ENCODE measurements at regions of chr20 and their contacts with region 1.

Region 1: DNA sequence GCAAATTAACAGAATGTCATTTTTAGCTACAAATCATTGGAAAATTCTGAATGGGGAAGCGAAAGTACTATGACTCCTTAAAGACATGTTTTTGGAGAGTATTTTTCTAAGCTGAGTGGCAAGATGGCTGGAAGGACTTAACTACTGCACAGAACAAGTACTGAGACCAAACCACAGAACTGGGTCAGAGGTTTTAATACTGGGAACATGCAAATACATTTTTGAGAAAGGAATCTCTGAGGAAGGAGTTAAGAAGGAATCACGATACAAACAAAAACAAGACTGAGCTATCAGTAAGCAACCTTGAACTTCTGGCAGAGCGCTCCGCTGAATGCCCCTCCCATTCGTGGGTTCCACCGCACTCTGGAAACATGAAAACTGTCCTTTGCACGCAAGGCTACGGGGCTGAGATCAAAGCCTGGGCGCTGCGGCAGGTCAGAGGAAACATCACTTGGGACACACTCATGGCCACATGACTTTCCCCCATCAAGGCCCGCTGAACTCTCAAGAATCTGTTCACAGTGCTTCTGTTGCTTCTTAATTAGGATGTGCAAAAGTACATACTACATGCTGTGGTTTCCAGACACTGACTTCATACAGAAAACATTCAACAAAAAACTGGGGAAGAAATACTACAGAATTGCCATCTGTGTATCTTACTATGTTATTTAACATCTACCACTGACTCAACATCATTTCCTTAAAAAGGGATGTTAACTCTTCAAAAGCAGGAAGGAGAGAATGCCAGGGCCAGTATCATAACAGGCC is 27.8 kb downstream of the SLC23A2 start:
- DNase-seq: peak; percentile 59
- ATAC-seq: peak; percentile 78
- H3K4me3 Mint-ChIP-seq: peak overlapping the region; percentile 81
- H3K27ac Mint-ChIP-seq: peak overlapping the region; percentile 96
- H3K4me1 Mint-ChIP-seq: peaks cover 67% of the 10 kb centered on the region
- H3K27me3 Mint-ChIP-seq: no peaks in the 10 kb centered on the region
- CTCF ChIP-seq: no peak

Region 2: GRCh38 chr20:4898282-4899244 is 75.0 kb before region 1 on chr20:
- CTCF ChIA-PET with region 1: no interaction called
- POLR2A ChIA-PET with region 1: no interaction called
- intact Hi-C with region 1: no loop called
- DNase-seq: no peak
- ATAC-seq: no peak
- H3K4me3 Mint-ChIP-seq: no peak overlapping the region
- H3K27ac Mint-ChIP-seq: no peak overlapping the region
- H3K4me1 Mint-ChIP-seq: peaks cover 31% of the 10 kb centered on the region
- H3K27me3 Mint-ChIP-seq: no peaks in the 10 kb centered on the region
- CTCF ChIP-seq: no peak

Region 3: GRCh38 chr20:4944518-4945313 is 28.8 kb before region 1 on chr20:
- CTCF ChIA-PET with region 1: no interaction called
- POLR2A ChIA-PET with region 1: interaction called, 10 read pairs
- intact Hi-C with region 1: no loop called
- DNase-seq: no peak
- ATAC-seq: no peak
- H3K4me3 Mint-ChIP-seq: no peak overlapping the region
- H3K27ac Mint-ChIP-seq: no peak overlapping the region
- H3K4me1 Mint-ChIP-seq: peaks cover 85% of the 10 kb centered on the region
- H3K27me3 Mint-ChIP-seq: no peaks in the 10 kb centered on the region
- CTCF ChIP-seq: no peak

Region 4: GRCh38 chr20:4961746-4962145 is 11.8 kb before region 1 on chr20:
- CTCF ChIA-PET with region 1: interaction called, 3 read pairs
- POLR2A ChIA-PET with region 1: interaction called, 21 read pairs
- intact Hi-C with region 1: loop called (anchors 1 kb)
- DNase-seq: no peak
- ATAC-seq: peak; percentile 34
- H3K4me3 Mint-ChIP-seq: no peak overlapping the region
- H3K27ac Mint-ChIP-seq: peak overlapping the region; percentile 67
- H3K4me1 Mint-ChIP-seq: peaks cover 39% of the 10 kb centered on the region
- H3K27me3 Mint-ChIP-seq: no peaks in the 10 kb centered on the region
- CTCF ChIP-seq: no peak

Region 5: DNA sequence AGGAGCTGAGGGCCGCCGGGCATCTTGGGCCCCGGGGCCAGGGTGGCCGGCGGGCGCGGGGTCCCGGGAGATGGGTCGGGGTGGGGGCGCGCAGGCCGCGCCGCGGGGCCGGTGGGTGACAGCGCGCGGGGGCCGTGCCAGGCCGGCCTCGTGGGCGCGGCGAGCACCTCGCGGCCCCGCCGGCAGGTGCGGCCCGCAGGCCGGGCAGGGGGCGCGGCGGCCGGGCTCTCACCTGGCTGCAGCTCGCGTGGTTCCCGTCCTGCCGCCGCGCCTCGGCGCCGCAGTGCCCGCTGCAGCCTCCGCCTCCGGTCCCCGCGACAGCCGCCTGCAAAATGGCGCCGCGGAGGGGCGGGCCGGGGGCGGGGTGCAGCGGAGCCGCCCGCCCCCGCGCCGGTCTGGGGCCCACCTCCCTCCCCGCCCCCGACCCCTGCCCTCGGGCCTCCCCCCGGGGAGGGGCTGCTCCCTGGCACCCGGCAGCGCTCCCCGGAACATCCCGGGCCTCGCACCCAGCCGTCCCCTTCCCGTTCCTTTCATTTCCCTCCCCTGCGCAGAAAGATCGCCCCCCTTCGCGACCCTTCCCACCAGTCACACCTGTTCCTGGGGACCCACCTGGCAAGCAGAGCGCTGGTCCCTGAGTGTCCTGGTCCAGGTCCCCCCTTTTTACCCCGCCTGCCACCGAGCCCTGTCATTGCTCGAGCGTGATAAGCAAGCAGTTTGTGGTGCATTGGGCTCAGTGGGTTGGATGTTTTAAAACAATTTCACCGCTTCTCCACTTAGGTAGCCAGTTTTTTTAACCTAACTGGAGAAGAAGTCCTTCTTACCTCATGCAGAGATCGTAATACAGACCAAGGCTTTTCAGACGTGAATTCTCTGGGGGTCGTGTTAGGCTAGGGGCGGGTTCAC is 27.9 kb after region 1 on chr20 and contains the start of gene SLC23A2:
- CTCF ChIA-PET with region 1: interaction called, 4 read pairs
- POLR2A ChIA-PET with region 1: interaction called, 10 read pairs
- intact Hi-C with region 1: no loop called
- DNase-seq: peak; percentile 64
- ATAC-seq: peak; percentile 81
- H3K4me3 Mint-ChIP-seq: peak within 1 kb of the TSS; percentile 98
- H3K27ac Mint-ChIP-seq: peak within 1 kb of the TSS; percentile 92
- H3K4me1 Mint-ChIP-seq: peaks cover 43% of the 10 kb centered on the region
- H3K27me3 Mint-ChIP-seq: no peaks in the 10 kb centered on the region
- CTCF ChIP-seq: no peak
- total RNA-seq, gene SLC23A2: 70.9 and 79.8 TPM in 2 replicates

Region 6: DNA sequence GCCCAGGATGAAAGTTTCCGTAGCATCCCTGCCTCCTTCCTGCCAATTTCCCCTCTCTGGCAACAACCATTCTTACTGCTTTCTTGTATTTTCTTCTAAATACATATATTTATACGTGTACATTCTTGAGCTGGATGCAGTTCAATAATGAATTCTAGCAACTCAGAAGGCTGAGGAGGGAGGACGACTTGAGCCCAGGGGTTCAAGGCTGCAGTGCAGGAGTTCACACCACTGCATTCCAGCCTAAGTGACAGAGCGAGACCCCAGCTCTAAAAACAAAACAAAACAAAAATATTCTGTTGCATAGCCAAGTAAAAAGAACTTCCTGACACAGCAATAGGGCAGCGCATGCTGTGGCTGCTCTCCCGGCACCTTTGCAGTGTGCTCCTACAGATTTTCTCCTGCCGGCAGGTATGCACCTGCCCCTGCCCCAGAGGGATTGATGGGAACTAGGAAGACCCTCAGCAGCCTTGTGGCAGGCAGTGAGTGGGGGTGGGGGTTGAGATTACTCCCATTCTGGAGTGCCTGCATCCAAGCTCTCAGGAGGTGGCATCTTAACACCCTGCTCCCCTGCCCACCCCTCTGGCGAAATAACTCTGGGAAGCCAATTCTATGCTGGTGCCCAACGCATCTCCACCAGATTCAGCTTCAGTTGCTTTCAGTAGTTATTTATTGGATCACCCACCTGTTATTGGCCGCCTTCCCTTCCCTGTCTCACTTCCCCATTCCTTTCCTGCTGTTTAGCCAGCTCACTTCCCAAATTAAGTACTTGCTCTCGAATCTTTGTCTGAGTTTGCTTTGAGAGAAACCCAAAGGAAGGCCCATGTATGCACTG is 56.7 kb after region 1 on chr20:
- CTCF ChIA-PET with region 1: no interaction called
- POLR2A ChIA-PET with region 1: no interaction called
- intact Hi-C with region 1: no loop called
- DNase-seq: no peak
- ATAC-seq: no peak
- H3K4me3 Mint-ChIP-seq: no peak overlapping the region
- H3K27ac Mint-ChIP-seq: no peak overlapping the region
- H3K4me1 Mint-ChIP-seq: peaks cover 4% of the 10 kb centered on the region
- H3K27me3 Mint-ChIP-seq: no peaks in the 10 kb centered on the region
- CTCF ChIP-seq: no peak

Region 7: GRCh38 chr20:5045906-5046305 is 72.4 kb after region 1 on chr20:
- CTCF ChIA-PET with region 1: no interaction called
- POLR2A ChIA-PET with region 1: no interaction called
- intact Hi-C with region 1: no loop called
- DNase-seq: no peak
- ATAC-seq: no peak
- H3K4me3 Mint-ChIP-seq: no peak overlapping the region
- H3K27ac Mint-ChIP-seq: peak overlapping the region; percentile 42
- H3K4me1 Mint-ChIP-seq: peaks cover 34% of the 10 kb centered on the region
- H3K27me3 Mint-ChIP-seq: no peaks in the 10 kb centered on the region
- CTCF ChIP-seq: no peak

Region 8: DNA sequence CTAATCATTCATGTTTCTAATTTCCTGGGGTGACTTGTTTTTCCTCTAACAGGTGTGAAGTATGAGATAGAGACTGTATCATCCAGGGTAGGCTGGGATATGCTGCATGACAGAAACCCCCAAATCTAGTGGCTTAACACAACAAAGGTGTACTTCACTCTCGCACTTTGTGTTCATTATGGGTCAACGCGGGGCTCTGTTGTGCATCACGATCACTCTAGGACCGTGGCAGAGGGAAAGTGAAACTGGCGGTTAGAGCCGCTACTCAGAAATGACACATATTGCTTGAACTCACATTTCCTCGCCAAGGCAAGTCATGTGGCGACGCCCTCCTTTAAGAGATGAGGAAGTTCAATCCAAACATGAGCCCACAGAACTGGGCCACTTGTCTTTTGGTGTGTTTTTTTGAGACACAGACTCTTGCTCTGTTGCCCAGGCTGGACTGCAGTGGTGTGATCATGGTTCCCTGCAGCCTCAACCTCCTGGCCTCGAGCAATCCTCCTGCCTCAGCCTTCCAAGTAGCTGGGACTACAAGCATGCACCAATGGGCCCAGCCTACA is 105.0 kb after region 1 on chr20:
- CTCF ChIA-PET with region 1: interaction called, 4 read pairs
- POLR2A ChIA-PET with region 1: interaction called, 16 read pairs
- intact Hi-C with region 1: loop called (anchors 1 kb)
- DNase-seq: peak; percentile 50
- ATAC-seq: peak; percentile 91
- H3K4me3 Mint-ChIP-seq: peak overlapping the region; percentile 71
- H3K27ac Mint-ChIP-seq: peak overlapping the region; percentile 92
- H3K4me1 Mint-ChIP-seq: peaks cover 55% of the 10 kb centered on the region
- H3K27me3 Mint-ChIP-seq: no peaks in the 10 kb centered on the region
- CTCF ChIP-seq: no peak